Right ventricle myocardium superior (tissue), 1 donor: ENCODE measurements at regions of chr18 and their contacts with region 1.

Region 1: GRCh38 chr18:62522504-62523254 is at the start of gene ZCCHC2:
- DNase-seq: peak; percentile 99
- ATAC-seq: peak; percentile 87
- total RNA-seq, gene ZCCHC2: 16.1 TPM

Region 2: GRCh38 chr18:62425465-62426195 is 97.0 kb before region 1 on chr18:
- intact Hi-C with region 1: loop called (anchors 5 kb)
- DNase-seq: peak; percentile 63
- ATAC-seq: peak; percentile 94

Region 3: GRCh38 chr18:62682371-62682770 is 159.7 kb after region 1 on chr18:
- intact Hi-C with region 1: no loop called
- DNase-seq: no peak
- ATAC-seq: no peak